ENCODE measurements at regions of chr9 and their contacts with region 1.

Region 1: GRCh38 chr9:96418074-96418809 is at the start of gene ZNF367:
- DNase-seq: peak; percentile 96 to 98
- ATAC-seq: peak; percentile 77 to 82
- H3K4me3 ChIP-seq: peak within 1 kb of the TSS; percentile 71 to 89 (median 84)
- H3K27ac ChIP-seq: peak within 1 kb of the TSS; percentile 99
- H3K4me1 ChIP-seq: peaks cover 21 to 26% of the 10 kb centered on the region in 2 donors
- H3K27me3 ChIP-seq: no peaks in the 10 kb centered on the region
- CTCF ChIP-seq: no peak
- POLR2A ChIP-seq: peak in 1 of 2 donors; percentile 8
- total RNA-seq, gene ZNF367: 0.15 to 5.1 (median 1.7) TPM

Region 2: DNA sequence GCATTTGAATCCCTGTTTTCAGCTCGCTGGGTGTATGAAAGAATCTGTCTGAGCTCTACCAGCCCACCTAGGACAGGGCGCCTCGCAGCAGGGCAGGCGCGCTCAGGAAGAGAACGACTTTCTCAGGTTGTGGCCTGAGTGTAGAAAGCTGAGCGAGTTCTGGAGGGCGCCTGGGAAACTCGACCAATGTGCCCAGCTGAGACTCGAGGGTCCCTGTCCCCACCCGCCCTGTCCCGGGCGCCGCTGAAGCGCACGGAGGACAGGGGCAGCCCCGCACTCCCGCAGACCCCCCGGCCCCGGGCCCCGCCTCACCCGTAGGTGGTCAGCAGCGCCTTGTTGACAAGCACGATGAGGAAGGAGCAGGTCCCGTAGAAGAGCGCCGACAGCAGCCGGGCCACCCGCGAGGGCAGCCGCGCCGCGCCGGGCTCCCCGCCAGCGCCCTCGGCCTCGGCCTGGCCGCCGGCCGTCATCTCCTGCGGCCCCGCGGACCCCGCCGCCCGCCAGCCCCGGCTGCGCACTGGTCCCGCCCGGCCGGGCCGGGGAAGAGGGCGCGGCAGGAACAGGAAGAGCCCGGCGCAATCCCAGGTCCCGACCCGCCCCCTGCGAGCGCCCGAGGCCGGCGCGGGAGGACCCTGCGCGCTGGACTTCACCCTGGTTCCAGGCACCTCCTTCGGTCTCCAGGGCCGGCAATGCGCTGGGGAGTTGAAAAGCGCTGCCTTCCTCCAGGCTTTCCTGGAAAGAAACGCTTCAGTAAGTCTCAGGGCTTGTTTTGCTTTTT is 34.9 kb before region 1 on chr9 and contains the start of gene SLC35D2:
- in situ Hi-C with region 1: no loop called
- intact Hi-C with region 1: loop called (anchors 2 kb)
- DNase-seq: peak; percentile 8 to 22
- ATAC-seq: peak; percentile 65 to 80
- H3K4me3 ChIP-seq: peak within 1 kb of the TSS; percentile 64 to 85 (median 66)
- H3K27ac ChIP-seq: peak within 1 kb of the TSS; percentile 68 to 80 (median 73)
- H3K4me1 ChIP-seq: peaks cover 3 to 9% of the 10 kb centered on the region in 2 donors
- H3K27me3 ChIP-seq: no peaks in the 10 kb centered on the region
- CTCF ChIP-seq: no peak
- POLR2A ChIP-seq: peak in 1 of 2 donors; percentile 19
- total RNA-seq, gene SLC35D2: 3.0 to 9.0 (median 6.8) TPM

Region 3: DNA sequence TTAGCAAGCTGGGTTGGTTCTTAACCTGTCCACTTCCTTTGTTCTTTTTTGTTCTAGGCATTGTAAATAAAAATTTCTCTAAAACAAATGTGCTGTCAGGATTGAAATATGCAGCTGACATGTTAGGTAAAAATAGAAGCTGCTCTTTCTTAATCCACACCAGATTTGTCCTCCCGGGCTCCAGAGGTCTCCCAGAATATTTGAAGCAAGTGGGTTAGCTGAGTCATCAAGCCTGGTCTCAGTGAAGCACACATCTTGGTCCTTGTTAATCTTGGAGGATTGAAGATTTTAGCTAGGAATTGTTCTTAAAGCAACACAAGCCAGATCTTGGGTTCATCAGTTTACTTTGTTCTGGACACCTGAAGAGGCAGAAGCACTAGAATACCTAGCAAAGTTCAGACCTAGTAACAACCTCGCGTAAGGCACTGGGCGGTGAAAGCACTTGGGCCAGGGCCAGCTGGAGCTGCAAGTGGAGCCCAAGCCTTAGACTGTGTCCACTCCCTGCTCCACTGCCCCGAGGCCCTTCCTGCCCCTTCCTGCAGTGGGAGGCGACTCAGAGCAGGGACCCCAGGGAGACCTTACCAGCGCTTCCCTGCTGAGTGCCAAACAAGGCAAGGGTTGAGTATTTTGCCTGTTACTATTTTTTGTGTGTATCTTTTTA is 68.3 kb after region 1 on chr9:
- in situ Hi-C with region 1: no loop called
- intact Hi-C with region 1: loop called (anchors 2 kb)
- DNase-seq: peak; percentile 36 to 72
- ATAC-seq: peak; percentile 89 to 98
- H3K4me3 ChIP-seq: no peak overlapping the region
- H3K27ac ChIP-seq: peak overlapping the region; percentile 62 to 69 (median 66)
- H3K4me1 ChIP-seq: peaks cover 19 to 21% of the 10 kb centered on the region in 2 donors
- H3K27me3 ChIP-seq: no peaks in the 10 kb centered on the region
- CTCF ChIP-seq: no peak
- POLR2A ChIP-seq: no peak

Region 4: DNA sequence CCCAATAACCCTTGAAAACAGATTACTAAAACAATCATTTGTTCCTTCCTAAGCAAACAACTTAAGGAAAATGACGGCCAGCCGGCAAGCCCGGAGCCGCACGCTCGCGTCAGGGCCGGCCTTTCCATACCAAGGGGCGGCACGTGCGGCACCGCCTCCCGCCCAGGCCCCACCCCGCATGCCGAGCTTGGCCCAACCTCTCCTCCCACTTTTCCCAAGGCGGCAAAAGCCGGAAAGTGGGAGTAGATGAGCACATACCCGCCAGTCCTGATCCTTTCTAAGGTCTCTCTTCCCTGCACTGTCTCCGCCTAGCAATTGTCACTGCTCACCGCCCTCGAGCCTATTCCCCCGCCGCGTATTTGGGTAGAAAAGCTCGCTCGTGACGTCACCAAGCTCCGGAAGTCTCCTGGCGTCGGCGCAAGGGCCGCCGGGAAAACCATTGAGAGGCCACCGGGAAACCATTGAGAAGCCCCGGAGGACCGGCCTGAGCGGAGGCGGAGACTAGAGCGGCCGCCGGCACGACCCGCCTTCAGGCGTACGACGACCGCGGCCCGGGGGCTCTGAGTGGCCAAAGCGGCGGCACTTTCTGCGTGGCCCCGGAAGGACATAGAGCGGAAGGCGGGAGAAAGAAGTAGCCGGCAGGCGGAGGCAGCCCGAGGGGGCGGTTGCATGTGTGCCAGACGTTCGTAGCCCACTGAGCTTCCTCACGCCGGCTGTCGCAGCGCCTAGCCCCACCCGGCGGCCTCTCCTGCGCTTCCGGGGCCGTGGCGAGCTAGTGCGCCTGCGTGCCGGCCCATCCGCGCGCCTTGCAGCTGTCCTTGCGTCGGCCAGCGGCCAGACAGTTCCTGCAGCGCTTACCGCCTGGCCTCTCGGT is 1215.0 kb after region 1 on chr9 and contains the starts of genes NCBP1 and TSTD2:
- in situ Hi-C with region 1: no loop called
- intact Hi-C with region 1: loop called (anchors 10 kb)
- DNase-seq: peak; percentile 96 to 98
- ATAC-seq: peak; percentile 87 to 88
- H3K4me3 ChIP-seq: peak within 1 kb of the TSS; percentile 86 to 92 (median 88)
- H3K27ac ChIP-seq: peak within 1 kb of the TSS; percentile 91 to 99 (median 98)
- H3K4me1 ChIP-seq: peaks cover 53 to 56% of the 10 kb centered on the region in 2 donors
- H3K27me3 ChIP-seq: no peaks in the 10 kb centered on the region
- CTCF ChIP-seq: peak in 1 of 5 experiments; percentile 8
- POLR2A ChIP-seq: peak; percentile 83 to 87
- total RNA-seq, gene NCBP1: 8.2 to 17.2 (median 15.7) TPM
- total RNA-seq, gene TSTD2: 11.6 to 19.9 (median 14.5) TPM